T-cell (primary cell): ENCODE measurements at regions of chr1 and their contacts with region 1.

Region 1: DNA sequence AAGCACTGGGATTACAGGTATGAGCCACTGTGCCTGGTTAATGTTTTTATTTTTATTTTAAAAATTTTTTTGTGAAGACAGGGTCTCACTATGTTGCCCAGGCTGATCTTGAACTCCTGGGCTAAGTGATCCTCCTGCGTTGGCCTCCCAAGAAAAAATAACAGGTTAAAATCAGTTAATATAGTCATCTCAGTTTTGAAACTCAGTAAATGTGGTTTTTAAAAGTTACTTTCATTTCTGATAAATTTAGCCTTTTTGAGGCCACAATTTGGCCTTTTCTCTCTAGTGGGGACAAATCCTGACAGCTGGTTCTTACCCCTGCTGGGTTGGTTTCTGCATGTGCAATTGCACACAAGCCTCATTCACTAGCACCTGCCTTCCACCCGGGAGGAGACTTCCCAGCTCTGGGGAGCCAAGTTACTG is 13.3 kb downstream of the PMF1 start:
- DNase-seq: no peak
- ATAC-seq: no peak
- H3K4me3 ChIP-seq: no peak overlapping the region
- H3K4me3 Mint-ChIP-seq: no peak overlapping the region
- H3K27ac ChIP-seq: no peak overlapping the region
- H3K27ac Mint-ChIP-seq: peak overlapping the region; percentile 11 to 68
- H3K4me1 ChIP-seq: peaks cover 0 to 16% of the 10 kb centered on the region in 2 experiments
- H3K4me1 Mint-ChIP-seq: peaks cover 10 to 39% (median 32%) of the 10 kb centered on the region in 3 donors
- H3K27me3 ChIP-seq: no peaks in the 10 kb centered on the region
- H3K27me3 Mint-ChIP-seq: no peaks in the 10 kb centered on the region

Region 2: DNA sequence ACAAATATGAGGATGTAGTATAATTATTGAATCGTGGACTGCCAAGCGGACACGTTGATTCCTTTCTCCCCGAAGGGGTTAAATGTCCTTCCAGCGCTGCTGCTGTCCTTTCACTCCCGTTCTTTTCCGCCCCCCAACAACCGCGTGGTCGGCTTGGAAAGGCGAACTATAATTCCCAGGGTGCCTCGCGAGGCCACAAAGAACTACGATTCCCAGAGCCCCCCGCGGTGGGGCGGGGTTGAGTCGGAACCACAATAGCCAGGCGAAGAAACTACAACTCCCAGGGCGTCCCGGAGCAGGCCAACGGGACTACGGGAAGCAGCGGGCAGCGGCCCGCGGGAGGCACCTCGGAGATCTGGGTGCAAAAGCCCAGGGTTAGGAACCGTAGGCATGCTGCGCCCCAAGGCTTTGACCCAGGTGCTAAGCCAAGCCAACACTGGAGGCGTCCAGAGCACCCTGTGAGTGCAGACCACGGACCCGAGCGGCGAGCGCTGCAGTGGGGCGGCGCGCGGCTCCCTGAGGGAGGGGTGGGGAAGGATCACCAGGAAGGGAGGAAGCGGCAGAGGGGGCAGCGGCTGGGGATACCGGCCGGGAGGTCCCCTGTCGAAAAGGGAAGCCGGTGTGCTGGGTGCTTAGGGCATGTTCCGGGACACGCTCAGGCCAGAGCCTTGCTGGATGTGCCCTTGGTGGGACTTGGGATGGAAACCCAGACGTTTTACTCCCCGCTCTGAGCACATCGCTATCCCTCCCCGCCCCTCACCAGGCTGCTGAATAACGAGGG is 171.4 kb before region 1 on chr1 and contains the start of gene LAMTOR2:
- CTCF ChIA-PET with region 1: interaction called in 1 of 2 experiments, 10 read pairs
- POLR2A ChIA-PET with region 1: no interaction called
- DNase-seq: peak; percentile 87 to 97 (median 95)
- ATAC-seq: peak; percentile 78 to 85 (median 82)
- H3K4me3 ChIP-seq: peak within 1 kb of the TSS; percentile 80 to 82
- H3K4me3 Mint-ChIP-seq: peak within 1 kb of the TSS; percentile 93 to 100 (median 95)
- H3K27ac ChIP-seq: peak within 1 kb of the TSS; percentile 78
- H3K27ac Mint-ChIP-seq: peak within 1 kb of the TSS; percentile 90 to 95
- H3K4me1 ChIP-seq: peaks cover 6 to 22% of the 10 kb centered on the region in 2 experiments
- H3K4me1 Mint-ChIP-seq: peaks cover 28 to 43% (median 34%) of the 10 kb centered on the region in 3 donors
- H3K27me3 ChIP-seq: no peaks in the 10 kb centered on the region
- H3K27me3 Mint-ChIP-seq: no peaks in the 10 kb centered on the region
- total RNA-seq, gene LAMTOR2: 21.5 to 37.8 (median 35.2) TPM

Region 3: GRCh38 chr1:156096640-156097391 is 129.3 kb before region 1 on chr1:
- CTCF ChIA-PET with region 1: interaction called in 1 of 2 experiments, 15 read pairs
- POLR2A ChIA-PET with region 1: interaction called, 5 read pairs
- DNase-seq: peak; percentile 67 to 96 (median 83)
- ATAC-seq: peak; percentile 81 to 85 (median 82)
- H3K4me3 ChIP-seq: peak overlapping the region; percentile 17 to 35
- H3K4me3 Mint-ChIP-seq: peak overlapping the region; percentile 48 to 64 (median 53)
- H3K27ac ChIP-seq: peak overlapping the region; percentile 95
- H3K27ac Mint-ChIP-seq: peak overlapping the region; percentile 81 to 93
- H3K4me1 ChIP-seq: peaks cover 12 to 28% of the 10 kb centered on the region in 2 experiments
- H3K4me1 Mint-ChIP-seq: peaks cover 37 to 52% (median 41%) of the 10 kb centered on the region in 3 donors
- H3K27me3 ChIP-seq: peaks cover 0 to 2% of the 10 kb centered on the region in 2 experiments
- H3K27me3 Mint-ChIP-seq: peaks cover 0 to 4% of the 10 kb centered on the region in 2 donors

Region 4: DNA sequence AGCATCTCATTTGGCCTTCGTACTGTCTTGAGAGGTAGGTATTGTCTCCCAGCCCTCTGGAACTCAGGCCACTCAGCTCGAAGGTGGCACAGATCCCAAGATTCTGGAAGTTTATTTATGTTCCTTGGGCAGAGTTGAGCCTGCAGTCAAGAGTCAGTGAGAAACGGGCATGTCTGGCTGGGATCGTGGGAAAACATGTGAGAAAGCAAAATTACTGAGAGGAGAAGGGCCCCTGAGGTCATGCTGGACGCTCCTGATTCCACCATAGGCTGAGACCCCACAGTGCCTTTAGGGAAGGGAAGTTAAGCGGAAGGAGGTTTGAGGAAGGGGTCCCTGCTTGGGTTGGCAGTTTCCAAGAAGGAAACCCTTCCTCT is 85.3 kb before region 1 on chr1:
- CTCF ChIA-PET with region 1: interaction called, 11 to 31 read pairs
- POLR2A ChIA-PET with region 1: interaction called in 1 of 2 experiments, 4 read pairs
- DNase-seq: no peak
- ATAC-seq: no peak
- H3K4me3 ChIP-seq: no peak overlapping the region
- H3K4me3 Mint-ChIP-seq: no peak overlapping the region
- H3K27ac ChIP-seq: no peak overlapping the region
- H3K27ac Mint-ChIP-seq: peak overlapping the region in 1 of 2 donors; percentile 48
- H3K4me1 ChIP-seq: peaks cover 0 to 2% of the 10 kb centered on the region in 2 experiments
- H3K4me1 Mint-ChIP-seq: peaks cover 3 to 4% (median 4%) of the 10 kb centered on the region in 3 donors
- H3K27me3 ChIP-seq: peaks cover 0 to 7% of the 10 kb centered on the region in 2 experiments
- H3K27me3 Mint-ChIP-seq: no peaks in the 10 kb centered on the region

Region 5: GRCh38 chr1:156193488-156194299 is 32.4 kb before region 1 on chr1 and contains the start of gene SLC25A44:
- CTCF ChIA-PET with region 1: interaction called in 1 of 2 experiments, 14 read pairs
- POLR2A ChIA-PET with region 1: no interaction called
- DNase-seq: peak; percentile 91 to 100 (median 96)
- ATAC-seq: peak; percentile 97 to 99 (median 99)
- H3K4me3 ChIP-seq: peak within 1 kb of the TSS; percentile 85 to 89
- H3K4me3 Mint-ChIP-seq: peak within 1 kb of the TSS; percentile 94 to 100 (median 98)
- H3K27ac ChIP-seq: peak within 1 kb of the TSS; percentile 80
- H3K27ac Mint-ChIP-seq: peak within 1 kb of the TSS; percentile 89 to 93
- H3K4me1 ChIP-seq: peaks cover 5 to 40% of the 10 kb centered on the region in 2 experiments
- H3K4me1 Mint-ChIP-seq: peaks cover 54 to 56% (median 55%) of the 10 kb centered on the region in 3 donors
- H3K27me3 ChIP-seq: no peaks in the 10 kb centered on the region
- H3K27me3 Mint-ChIP-seq: no peaks in the 10 kb centered on the region
- total RNA-seq, gene SLC25A44: 16.8 to 24.5 (median 21.4) TPM